Activated CD4-positive, alpha-beta memory T cell treated with anti-CD3 and anti-CD28 coated beads for 36 hours (primary cell): ENCODE measurements at regions of chr2 and their contacts with region 1.

Region 1: DNA sequence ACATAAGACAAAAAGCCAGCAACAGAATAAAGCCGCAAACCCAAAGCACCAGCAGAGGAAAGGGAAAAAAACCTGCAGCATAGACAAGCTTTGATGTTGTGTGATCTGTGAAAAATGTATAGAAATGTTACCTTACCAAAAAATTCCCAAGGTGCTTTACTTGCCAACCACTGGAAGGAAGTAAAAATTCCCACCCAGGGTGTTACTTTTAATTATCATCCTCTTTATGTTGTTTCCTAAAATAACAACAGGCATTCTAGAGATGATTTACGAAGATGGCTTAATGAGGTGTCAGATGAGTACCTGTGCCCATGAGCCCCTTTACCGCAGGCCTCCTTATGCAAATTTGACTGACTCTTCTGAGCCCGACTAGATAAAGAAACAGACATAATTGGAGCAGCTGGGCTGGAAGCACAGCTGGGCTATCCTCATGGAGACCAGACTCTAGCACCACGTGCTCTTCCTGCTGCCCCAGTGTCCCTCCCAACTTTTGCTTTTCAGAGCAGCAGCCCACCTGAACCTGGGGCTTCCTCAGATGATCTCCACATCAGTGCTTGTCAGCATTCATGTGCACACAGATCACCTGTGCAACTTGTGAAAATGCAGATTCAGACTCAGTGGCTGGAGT is 41.5 kb downstream of the SRSF7 start:
- DNase-seq: peak; percentile 72
- H3K4me3 Mint-ChIP-seq: peak overlapping the region; percentile 52
- H3K27ac Mint-ChIP-seq: peak overlapping the region; percentile 90
- H3K4me1 Mint-ChIP-seq: peaks cover 74% of the 10 kb centered on the region
- H3K27me3 Mint-ChIP-seq: no peaks in the 10 kb centered on the region

Region 2: GRCh38 chr2:38690499-38691294 is 19.0 kb before region 1 on chr2:
- CTCF ChIA-PET with region 1: interaction called, 3 read pairs
- POLR2A ChIA-PET with region 1: interaction called, 3 read pairs
- intact Hi-C with region 1: loop called (anchors 2 kb)
- DNase-seq: peak; percentile 50
- H3K4me3 Mint-ChIP-seq: no peak overlapping the region
- H3K27ac Mint-ChIP-seq: peak overlapping the region; percentile 88
- H3K4me1 Mint-ChIP-seq: peaks cover 78% of the 10 kb centered on the region
- H3K27me3 Mint-ChIP-seq: no peaks in the 10 kb centered on the region